ENCODE measurements at regions of chr10 and their contacts with region 1.

Region 1: DNA sequence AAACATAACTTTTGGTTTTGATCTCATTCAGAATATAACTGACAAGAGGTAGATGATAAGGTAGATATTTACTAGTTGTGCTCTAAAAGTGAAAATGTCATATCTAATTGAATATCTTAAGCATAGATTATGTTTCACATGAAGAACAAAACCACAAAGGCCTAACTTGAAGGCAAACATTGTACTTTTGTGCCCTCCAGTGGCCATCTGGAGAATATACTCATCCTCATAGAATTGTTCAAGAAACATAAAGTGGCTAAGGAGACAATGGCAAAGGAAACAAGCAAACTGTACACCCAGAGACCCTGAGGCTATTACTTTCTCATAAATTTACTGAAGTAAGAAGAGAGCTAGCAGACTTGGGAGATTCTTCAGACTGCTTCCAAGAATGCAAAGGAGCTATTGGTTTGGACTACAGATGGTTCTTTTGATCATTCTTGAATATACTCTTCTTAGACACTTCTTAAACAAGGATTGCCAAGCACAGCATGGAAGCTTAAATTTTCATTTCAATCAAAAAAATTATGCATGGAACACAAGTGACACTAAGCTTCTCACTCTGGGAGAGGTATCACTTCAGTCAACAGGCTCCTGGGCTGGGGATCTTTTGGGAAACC is 98.2 kb upstream of the DKK1 start:
- DNase-seq: peak; percentile 24 to 73
- ATAC-seq: peak; percentile 82 to 84; a peak in 5 of 6 replicates
- H3K4me3 ChIP-seq: no peak overlapping the region
- H3K27ac ChIP-seq: no peak overlapping the region
- H3K4me1 ChIP-seq: peaks cover 10% of the 10 kb centered on the region; the same call in 2 of the 3 replicates
- CTCF ChIP-seq: peak; percentile 77
- EP300 ChIP-seq: no peak
- POLR2A ChIP-seq: no peak
- RAD21 ChIP-seq: peak; percentile 86 to 89

Region 2: DNA sequence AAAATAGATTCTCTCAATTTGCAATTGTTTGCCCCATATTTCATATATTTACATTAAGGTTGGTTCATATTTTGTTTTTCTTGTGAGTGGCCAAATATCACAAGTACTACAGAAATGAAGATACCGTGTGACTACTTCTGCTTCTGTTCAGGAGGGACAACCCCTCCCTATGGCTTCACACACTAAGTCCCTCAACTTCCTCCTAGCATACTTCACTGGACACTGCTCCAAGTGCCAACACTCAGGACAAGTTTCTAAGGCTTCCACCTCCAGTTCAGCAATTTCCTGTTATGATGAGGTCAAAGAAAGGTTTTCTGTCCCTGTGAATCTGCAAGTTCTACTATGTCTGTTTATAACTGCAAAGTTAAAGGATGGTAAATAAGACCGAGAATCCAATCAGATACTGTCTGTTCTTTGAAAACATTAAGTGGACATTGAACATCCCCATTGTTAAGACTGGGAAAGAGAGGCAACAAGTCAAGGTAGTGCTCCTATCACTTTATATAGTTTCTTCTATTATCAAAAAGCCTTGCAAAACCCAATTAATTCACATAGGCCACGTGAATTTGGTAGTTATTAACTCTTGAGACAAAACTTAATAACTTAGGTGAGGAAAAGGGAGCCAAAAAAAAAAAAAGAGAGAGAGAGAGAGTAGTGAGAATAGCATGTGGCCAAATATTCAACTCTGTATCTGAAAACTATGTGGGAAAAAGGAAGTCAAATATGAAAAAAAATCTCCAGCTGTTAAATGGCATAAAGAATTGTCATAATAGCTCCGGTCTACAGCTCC is 16.9 kb after region 1 on chr10:
- CTCF ChIA-PET with region 1: interaction called, 13 read pairs
- POLR2A ChIA-PET with region 1: no interaction called
- DNase-seq: peak; percentile 7 to 27
- ATAC-seq: peak; percentile 70 to 79; a peak in 4 of 6 replicates
- H3K4me3 ChIP-seq: peak overlapping the region; percentile 39
- H3K27ac ChIP-seq: peak overlapping the region; percentile 25 to 66; a peak in 3 of 6 replicates
- H3K4me1 ChIP-seq: peaks cover 12% of the 10 kb centered on the region; the same call in 2 of the 3 replicates
- CTCF ChIP-seq: no peak
- EP300 ChIP-seq: no peak
- POLR2A ChIP-seq: no peak
- RAD21 ChIP-seq: no peak